ENCODE measurements at regions of chr2 and their contacts with region 1.

Region 1: GRCh38 chr2:73828818-73829570 is at the start of gene STAMBP:
- DNase-seq: peak; percentile 98
- H3K4me3 Mint-ChIP-seq: peak within 1 kb of the TSS; percentile 97
- H3K27ac Mint-ChIP-seq: peak within 1 kb of the TSS; percentile 96
- H3K4me1 Mint-ChIP-seq: peaks cover 44% of the 10 kb centered on the region
- H3K27me3 Mint-ChIP-seq: peaks cover 2% of the 10 kb centered on the region
- total RNA-seq, gene STAMBP: 58.4 and 59.9 TPM in 2 replicates

Region 2: GRCh38 chr2:73886357-73886756 is 57.4 kb after region 1 on chr2:
- intact Hi-C with region 1: loop called (anchors 2 kb)
- DNase-seq: no peak
- H3K4me3 Mint-ChIP-seq: peak overlapping the region; percentile 12
- H3K27ac Mint-ChIP-seq: peak overlapping the region; percentile 82
- H3K4me1 Mint-ChIP-seq: peaks cover 24% of the 10 kb centered on the region
- H3K27me3 Mint-ChIP-seq: peaks cover 3% of the 10 kb centered on the region

Region 3: DNA sequence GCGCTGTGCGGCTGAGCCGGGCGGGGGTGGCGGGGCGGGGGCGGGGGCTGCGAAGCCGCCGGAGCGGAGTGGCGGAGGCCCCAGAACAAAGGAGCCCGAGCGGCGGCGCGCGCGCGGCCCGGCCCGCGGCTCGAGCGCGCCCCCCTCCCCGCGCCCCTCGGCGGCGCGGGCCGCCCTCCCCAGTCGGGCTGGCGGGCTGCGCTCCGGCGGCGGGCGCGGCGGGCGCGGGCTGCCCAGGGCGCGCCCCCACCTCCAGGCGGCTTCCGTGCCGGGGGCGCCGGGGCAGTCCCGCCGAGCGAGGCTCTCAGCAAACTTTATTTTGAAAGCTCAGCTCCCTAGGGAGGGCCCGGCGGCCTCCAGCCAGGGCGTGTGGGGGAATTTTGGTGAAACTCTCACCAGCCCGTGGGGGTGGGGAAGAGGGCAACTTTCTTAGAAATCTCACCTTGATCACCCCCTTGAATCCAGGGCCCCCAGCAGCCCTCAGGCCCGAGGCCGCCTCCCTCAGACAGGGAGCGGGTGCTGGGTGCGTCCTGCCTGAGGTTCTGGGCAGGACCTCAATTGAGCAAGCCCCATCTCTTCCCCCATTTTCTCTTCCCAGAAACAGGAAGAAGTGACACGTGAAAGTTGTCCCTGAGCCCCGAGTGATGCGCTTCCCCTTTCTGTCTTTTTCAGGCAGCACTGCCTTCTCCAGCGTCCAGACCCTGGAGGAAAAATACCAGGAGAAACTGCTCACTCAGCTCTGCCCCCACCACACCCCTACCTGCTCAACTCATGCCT is 156.5 kb after region 1 on chr2:
- intact Hi-C with region 1: loop called (anchors 1 kb)
- DNase-seq: peak; percentile 83
- H3K4me3 Mint-ChIP-seq: peak overlapping the region; percentile 87
- H3K27ac Mint-ChIP-seq: peak overlapping the region; percentile 88
- H3K4me1 Mint-ChIP-seq: peaks cover 73% of the 10 kb centered on the region
- H3K27me3 Mint-ChIP-seq: peaks cover 9% of the 10 kb centered on the region

Region 4: DNA sequence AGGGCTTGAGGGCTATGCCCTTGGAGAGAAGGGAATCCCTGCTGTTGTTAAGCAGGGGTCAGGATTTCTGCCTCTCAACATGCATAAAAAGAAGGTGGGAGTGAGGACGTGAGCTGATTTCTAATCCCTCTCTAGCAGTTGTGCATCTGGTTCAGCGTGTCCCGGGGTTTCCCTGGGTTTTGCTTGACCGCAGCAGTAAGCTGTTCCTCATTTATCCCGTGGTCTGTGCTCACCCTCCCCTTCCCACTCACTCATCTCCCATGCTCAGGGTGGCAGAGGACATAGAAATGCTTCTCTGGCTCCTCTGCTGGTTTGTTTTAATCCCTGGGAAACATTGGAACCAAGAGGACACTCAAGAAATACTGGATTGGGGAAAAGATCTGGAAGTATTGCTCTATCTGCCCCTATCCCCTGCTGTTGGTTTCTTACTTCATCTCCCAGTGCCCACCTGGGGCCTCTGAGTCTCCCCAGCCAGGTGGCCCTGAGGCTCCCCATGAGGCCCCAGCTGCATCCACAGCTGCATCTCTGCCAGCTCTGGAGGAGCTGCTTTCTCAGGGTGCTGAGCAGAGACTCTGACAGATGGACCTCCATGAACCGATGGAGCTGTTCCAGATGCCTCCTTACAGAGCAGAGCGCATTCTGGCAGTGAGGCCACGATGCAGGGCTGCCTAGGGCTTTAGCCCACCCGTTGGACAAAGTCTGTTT is 191.9 kb after region 1 on chr2:
- intact Hi-C with region 1: no loop called
- DNase-seq: no peak
- H3K4me3 Mint-ChIP-seq: no peak overlapping the region
- H3K27ac Mint-ChIP-seq: peak overlapping the region; percentile 28
- H3K4me1 Mint-ChIP-seq: peaks cover 32% of the 10 kb centered on the region
- H3K27me3 Mint-ChIP-seq: no peaks in the 10 kb centered on the region

Region 5: DNA sequence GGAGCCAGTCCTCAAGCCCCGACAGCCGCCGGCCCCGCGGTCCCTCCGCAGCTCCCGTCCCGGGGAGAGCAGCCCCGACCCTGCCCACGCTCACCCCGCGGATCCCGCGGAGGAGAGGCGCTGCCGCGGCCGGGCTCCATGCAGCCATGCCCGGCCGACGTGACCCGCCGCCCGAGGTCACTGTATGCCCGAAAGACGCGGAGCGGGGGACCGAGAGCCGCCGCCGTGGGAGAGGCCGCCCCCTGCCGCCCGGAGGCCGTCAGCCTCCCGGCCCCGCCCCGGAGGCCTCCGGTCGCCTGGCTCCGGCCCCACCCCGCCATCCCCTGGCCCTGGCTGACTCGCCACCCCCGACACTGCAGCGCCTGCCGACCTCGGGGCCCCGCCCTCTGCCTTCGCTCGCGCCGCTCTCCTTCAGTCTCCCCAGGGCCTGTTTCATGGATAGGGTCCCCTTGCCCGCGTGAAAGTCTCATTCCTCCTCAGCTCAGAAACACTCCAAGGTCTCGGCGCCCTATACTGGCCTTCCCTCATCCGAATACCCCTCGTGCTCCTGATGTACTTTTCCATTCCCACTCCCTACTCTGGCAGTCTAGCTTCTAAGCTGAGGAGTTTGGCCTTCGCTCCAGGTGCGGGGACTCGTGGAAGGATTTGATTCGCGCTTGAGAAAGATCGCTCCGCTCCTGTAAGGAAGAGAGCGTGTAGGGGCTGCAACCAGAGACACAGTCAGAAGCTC is 318.9 kb after region 1 on chr2 and contains the start of gene BOLA3:
- intact Hi-C with region 1: loop called (anchors 1 kb)
- DNase-seq: peak; percentile 96
- H3K4me3 Mint-ChIP-seq: no peak within 1 kb of the TSS
- H3K27ac Mint-ChIP-seq: no peak within 1 kb of the TSS
- H3K4me1 Mint-ChIP-seq: peaks cover 2% of the 10 kb centered on the region
- H3K27me3 Mint-ChIP-seq: no peaks in the 10 kb centered on the region
- total RNA-seq, gene BOLA3: 100 and 103 TPM in 2 replicates